Activated CD4-positive, alpha-beta T cell treated with anti-CD3 and anti-CD28 coated beads, Interleukin-2, amount 10 ng/mL, durations not matched to agents 24 days and 14 days (primary cell): ENCODE measurements at regions of chr15 and their contacts with region 1.

Region 1: GRCh38 chr15:59492389-59493377 is 54.7 kb downstream of the FAM81A start:
- DNase-seq: peak; percentile 85
- H3K4me3 Mint-ChIP-seq: no peak overlapping the region
- H3K27ac Mint-ChIP-seq: no peak overlapping the region
- H3K4me1 Mint-ChIP-seq: peaks cover 2% of the 10 kb centered on the region
- H3K27me3 Mint-ChIP-seq: peaks cover 27% of the 10 kb centered on the region

Region 2: DNA sequence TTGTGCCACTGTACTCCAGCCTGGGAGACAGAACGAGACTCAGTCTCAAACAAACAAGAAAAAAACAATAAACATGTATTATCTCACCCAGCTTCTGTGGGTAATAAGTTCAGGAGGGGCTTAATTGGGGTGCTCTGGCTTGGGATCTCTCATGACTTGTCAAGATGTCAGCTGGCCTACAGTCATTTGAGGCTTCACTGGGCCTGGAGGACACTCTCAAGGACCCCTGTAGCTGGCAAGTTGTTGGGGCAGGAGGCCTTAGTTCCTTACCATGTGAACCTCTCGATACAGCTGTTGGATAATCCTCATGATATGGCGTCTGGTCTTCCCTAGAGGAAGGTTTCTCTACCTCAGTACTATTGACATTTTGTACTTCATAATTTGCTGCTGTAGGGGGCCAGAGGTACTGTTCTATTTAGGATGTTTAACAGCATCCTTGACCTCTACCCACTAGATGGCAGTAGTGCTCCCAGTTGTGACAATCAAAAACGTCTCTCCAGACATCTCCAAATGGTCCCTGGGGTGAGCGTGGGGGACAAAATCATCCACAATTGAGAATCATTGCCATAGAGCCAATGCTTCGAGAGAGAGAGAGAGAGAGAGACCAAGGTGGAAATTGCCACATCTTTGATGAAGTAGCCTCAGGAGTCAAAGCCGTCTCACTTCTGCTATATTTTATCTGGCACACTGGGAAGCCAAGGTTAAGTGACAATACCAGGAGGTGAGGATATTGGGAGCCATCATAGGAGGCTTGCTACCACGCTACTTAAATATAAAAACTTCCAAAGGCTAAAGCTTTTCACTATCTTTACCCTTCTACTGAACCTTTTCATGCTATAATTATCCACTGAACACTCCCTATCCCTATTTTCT is 535.3 kb before region 1 on chr15:
- intact Hi-C with region 1: loop called (anchors 2 kb)
- DNase-seq: peak; percentile 89
- H3K4me3 Mint-ChIP-seq: no peak overlapping the region
- H3K27ac Mint-ChIP-seq: no peak overlapping the region
- H3K4me1 Mint-ChIP-seq: peaks cover 10% of the 10 kb centered on the region
- H3K27me3 Mint-ChIP-seq: peaks cover 3% of the 10 kb centered on the region

Region 3: GRCh38 chr15:59174835-59175831 is 317.6 kb before region 1 on chr15:
- intact Hi-C with region 1: loop called (anchors 5 kb)
- DNase-seq: peak; percentile 76
- H3K4me3 Mint-ChIP-seq: no peak overlapping the region
- H3K27ac Mint-ChIP-seq: no peak overlapping the region
- H3K4me1 Mint-ChIP-seq: peaks cover 13% of the 10 kb centered on the region
- H3K27me3 Mint-ChIP-seq: no peaks in the 10 kb centered on the region

Region 4: DNA sequence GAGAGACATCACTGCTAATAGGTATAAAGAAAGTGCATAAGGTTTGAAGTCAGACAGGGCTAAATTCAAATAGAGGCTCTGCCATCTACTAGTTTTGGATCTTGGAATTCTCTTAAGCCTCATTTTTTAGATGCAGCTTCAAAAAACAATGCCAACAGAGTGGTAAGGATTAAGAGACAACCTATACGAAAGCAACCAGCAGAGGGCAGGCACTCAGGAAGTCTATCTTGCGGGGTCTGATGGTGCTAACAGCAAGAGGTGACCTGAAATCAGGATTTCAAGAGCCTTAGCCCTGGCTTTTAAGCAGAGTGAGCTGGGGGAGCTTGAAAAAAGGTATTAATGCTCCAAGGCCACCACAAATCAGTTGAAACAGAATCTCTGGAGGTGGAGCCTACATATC is 245.3 kb before region 1 on chr15:
- intact Hi-C with region 1: loop called (anchors 1 kb)
- DNase-seq: peak; percentile 85
- H3K4me3 Mint-ChIP-seq: no peak overlapping the region
- H3K27ac Mint-ChIP-seq: no peak overlapping the region
- H3K4me1 Mint-ChIP-seq: peaks cover 27% of the 10 kb centered on the region
- H3K27me3 Mint-ChIP-seq: no peaks in the 10 kb centered on the region

Region 5: GRCh38 chr15:59372352-59373211 is 120.1 kb before region 1 on chr15 and contains the start of gene MYO1E:
- intact Hi-C with region 1: loop called (anchors 2 kb)
- DNase-seq: peak; percentile 84
- H3K4me3 Mint-ChIP-seq: peak within 1 kb of the TSS; percentile 98
- H3K27ac Mint-ChIP-seq: peak within 1 kb of the TSS; percentile 80
- H3K4me1 Mint-ChIP-seq: peaks cover 33% of the 10 kb centered on the region
- H3K27me3 Mint-ChIP-seq: peaks cover 37% of the 10 kb centered on the region
- total RNA-seq, gene MYO1E: 34.5 and 45.1 TPM in 2 replicates

Region 6: DNA sequence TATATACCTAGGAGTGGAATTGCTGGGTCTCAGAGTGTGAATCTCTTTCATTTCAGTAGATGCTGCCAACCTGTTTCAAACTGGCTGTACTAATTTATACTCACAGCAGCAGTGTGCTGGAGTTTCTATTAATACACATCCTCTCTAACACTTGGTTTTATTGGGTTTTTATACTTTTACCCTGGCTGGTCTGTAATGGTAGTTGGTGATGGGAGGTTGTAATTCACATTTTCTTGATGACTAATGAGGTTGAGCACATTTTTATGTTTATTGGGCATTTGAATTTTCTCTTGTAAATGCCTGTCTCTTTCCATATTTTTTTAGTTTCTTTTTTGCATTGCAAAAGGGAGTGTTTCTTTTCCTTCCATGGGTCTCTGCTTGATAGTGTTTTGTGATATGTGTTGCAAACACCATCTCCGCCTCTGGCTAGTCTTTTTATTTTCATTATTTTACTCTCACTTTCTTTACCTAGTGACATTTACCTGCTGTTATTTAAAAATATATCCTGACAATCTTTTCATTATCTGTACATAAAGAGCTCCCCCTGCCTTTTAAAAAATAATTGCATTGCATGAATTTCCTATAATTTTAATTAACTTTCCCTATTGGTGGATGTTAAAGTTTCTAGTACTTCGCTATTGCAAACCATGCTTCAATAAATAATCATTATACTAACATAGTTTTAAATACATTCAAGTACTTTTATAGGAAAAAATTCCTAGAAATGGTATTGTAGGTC is 69.9 kb after region 1 on chr15:
- intact Hi-C with region 1: no loop called
- DNase-seq: no peak
- H3K4me3 Mint-ChIP-seq: no peak overlapping the region
- H3K27ac Mint-ChIP-seq: no peak overlapping the region
- H3K4me1 Mint-ChIP-seq: no peaks in the 10 kb centered on the region
- H3K27me3 Mint-ChIP-seq: peaks cover 15% of the 10 kb centered on the region